ENCODE measurements at regions of chr19 and their contacts with region 1.

Region 1: DNA sequence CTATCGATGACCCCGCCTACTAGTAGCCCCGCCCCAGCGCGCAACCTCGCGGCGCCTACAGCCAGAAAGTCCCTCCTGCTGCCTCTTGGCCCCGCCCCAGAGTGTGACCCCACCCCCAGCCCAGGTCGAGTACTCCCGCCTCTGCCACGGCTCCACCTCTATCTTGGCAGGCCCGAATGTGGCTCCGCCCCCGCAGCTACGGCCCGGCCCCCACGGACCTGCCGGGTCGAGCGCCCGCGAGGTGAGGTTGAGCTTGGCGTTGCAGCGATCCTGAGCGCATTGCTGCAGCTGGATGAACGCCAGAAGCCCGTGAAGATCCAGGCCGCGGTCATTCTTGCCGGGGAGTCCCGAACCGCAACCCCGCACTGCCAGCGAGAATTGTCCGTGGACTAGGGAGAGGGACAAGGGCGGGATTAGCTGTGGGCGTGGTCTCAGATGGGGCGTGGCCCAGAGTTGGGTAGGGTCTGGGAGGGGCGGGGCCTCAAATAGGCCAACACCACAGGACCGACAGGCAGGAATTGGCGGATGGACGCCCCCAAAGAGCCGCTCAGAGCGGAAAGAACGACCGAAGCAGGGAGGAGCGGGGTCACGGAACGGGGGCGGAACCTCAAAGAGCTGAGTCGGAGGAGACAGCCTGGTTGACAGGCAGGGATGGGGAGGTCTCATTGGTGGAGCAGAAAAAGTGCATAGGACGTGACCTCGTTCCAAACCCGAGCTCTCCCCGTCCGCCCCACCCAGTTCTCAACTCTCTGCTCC is 1.8 kb downstream of the LYPD3 start:
- DNase-seq: peak; percentile 99
- H3K4me3 Mint-ChIP-seq: peak overlapping the region; percentile 92
- H3K27ac Mint-ChIP-seq: peak overlapping the region; percentile 93
- H3K4me1 Mint-ChIP-seq: peaks cover 40% of the 10 kb centered on the region
- H3K27me3 Mint-ChIP-seq: no peaks in the 10 kb centered on the region

Region 2: DNA sequence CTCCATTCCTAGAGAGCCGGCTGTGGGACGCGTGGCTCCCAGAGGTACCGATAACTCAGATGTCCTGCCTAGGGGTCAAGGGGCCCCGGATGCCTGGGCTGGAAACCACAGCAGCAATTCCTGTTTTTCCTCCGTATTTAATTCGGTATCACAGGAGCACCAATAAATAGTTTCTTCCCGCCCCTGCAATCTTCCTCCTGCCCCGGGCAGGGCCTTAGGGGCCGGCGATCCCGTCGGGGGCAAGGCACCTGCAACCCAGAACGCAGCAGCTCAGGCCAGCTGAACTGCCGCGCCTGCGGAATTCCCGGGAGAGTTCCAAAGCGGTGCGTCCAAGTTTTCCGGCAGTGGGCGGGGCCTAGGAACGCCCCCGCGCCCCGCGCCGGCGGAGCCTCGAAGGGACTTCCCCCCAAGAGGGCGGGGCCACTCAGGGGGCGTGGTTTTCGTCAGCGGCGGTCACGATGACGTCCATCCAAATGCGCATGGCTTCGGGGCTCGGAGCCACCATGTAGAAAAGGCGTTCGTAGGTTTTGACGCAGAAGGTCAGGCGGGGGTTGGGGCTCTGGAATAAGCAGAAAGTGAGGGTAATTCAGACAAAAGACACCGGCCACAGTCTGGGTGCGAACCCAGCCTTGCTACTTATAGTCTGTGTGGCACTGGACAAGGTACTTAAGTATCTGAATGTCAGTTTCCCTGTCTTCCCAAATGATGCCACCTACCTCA is 11.6 kb after region 1 on chr19:
- intact Hi-C with region 1: loop called (anchors 1 kb)
- DNase-seq: peak; percentile 99
- H3K4me3 Mint-ChIP-seq: peak overlapping the region; percentile 71
- H3K27ac Mint-ChIP-seq: peak overlapping the region; percentile 73
- H3K4me1 Mint-ChIP-seq: peaks cover 13% of the 10 kb centered on the region
- H3K27me3 Mint-ChIP-seq: no peaks in the 10 kb centered on the region

Region 3: GRCh38 chr19:43503501-43504425 is 40.2 kb after region 1 on chr19:
- intact Hi-C with region 1: loop called (anchors 1 kb)
- DNase-seq: peak; percentile 100
- H3K4me3 Mint-ChIP-seq: peak overlapping the region; percentile 93
- H3K27ac Mint-ChIP-seq: peak overlapping the region; percentile 94
- H3K4me1 Mint-ChIP-seq: peaks cover 25% of the 10 kb centered on the region
- H3K27me3 Mint-ChIP-seq: no peaks in the 10 kb centered on the region

Region 4: GRCh38 chr19:43532962-43533545 is 69.5 kb after region 1 on chr19 and contains the start of gene ZNF575:
- intact Hi-C with region 1: loop called (anchors 1 kb)
- DNase-seq: peak; percentile 95
- H3K4me3 Mint-ChIP-seq: peak within 1 kb of the TSS; percentile 83
- H3K27ac Mint-ChIP-seq: peak within 1 kb of the TSS; percentile 95
- H3K4me1 Mint-ChIP-seq: peaks cover 20% of the 10 kb centered on the region
- H3K27me3 Mint-ChIP-seq: no peaks in the 10 kb centered on the region
- total RNA-seq, gene ZNF575: 1.8 and 2.4 TPM in 2 replicates

Region 5: GRCh38 chr19:43575156-43575950 is 111.8 kb after region 1 on chr19 and contains the starts of genes PINLYP and XRCC1:
- intact Hi-C with region 1: loop called (anchors 1 kb)
- DNase-seq: peak; percentile 99
- H3K4me3 Mint-ChIP-seq: peak within 1 kb of the TSS; percentile 96
- H3K27ac Mint-ChIP-seq: peak within 1 kb of the TSS; percentile 94
- H3K4me1 Mint-ChIP-seq: peaks cover 28% of the 10 kb centered on the region
- H3K27me3 Mint-ChIP-seq: no peaks in the 10 kb centered on the region
- total RNA-seq, gene PINLYP: 7.9 and 9.9 TPM in 2 replicates
- total RNA-seq, gene XRCC1: 27.5 and 29.6 TPM in 2 replicates

Region 6: DNA sequence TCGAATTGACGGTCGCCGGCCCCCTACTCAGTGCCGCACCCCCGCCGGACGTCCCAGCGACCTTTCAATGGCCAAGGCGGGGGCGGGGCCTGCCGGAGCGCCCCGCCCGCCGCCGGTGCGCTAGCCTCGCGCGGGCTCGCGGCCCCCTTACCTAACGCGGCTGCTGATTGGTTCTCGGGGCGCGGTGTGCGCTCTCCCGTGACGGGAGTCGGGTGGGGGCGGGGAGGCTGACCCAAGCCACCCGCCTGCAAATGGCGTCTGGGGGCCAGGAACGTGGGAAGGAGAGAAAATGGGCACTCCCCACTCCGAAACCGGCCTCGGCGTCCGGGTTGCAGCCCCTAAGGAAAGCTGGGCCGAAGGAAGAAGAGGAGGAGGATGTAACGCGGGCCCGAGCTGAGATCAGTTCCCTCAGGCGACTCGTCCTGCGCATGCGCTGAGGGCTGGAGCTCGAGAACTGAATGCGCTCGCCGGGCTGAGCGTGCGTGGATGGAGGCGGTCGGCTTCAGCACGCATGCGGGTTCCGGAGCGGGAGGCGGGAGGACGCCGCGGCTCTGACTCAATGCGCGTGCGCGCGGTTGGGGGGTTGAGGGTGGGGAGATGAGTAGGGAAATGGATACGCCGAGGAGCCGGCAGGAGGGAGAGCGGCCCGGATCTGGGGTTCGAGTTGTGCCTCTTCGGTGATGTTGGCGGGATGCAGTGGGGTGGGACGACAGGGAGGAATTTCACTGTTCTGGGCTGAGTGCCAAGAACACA is 291.1 kb after region 1 on chr19 and contains the start of gene SMG9:
- intact Hi-C with region 1: loop called (anchors 10 kb)
- DNase-seq: peak; percentile 100
- H3K4me3 Mint-ChIP-seq: peak within 1 kb of the TSS; percentile 94
- H3K27ac Mint-ChIP-seq: peak within 1 kb of the TSS; percentile 100
- H3K4me1 Mint-ChIP-seq: peaks cover 68% of the 10 kb centered on the region
- H3K27me3 Mint-ChIP-seq: no peaks in the 10 kb centered on the region
- total RNA-seq, gene SMG9: 83.9 and 86.6 TPM in 2 replicates

Measured in activated CD4-positive, alpha-beta T cell treated with anti-CD3 and anti-CD28 coated beads, Interleukin-2, amount 10 ng/mL, durations not matched to agents 24 days and 14 days (primary cell).